ENCODE measurements at regions of chr7 and their contacts with region 1.

Region 1: DNA sequence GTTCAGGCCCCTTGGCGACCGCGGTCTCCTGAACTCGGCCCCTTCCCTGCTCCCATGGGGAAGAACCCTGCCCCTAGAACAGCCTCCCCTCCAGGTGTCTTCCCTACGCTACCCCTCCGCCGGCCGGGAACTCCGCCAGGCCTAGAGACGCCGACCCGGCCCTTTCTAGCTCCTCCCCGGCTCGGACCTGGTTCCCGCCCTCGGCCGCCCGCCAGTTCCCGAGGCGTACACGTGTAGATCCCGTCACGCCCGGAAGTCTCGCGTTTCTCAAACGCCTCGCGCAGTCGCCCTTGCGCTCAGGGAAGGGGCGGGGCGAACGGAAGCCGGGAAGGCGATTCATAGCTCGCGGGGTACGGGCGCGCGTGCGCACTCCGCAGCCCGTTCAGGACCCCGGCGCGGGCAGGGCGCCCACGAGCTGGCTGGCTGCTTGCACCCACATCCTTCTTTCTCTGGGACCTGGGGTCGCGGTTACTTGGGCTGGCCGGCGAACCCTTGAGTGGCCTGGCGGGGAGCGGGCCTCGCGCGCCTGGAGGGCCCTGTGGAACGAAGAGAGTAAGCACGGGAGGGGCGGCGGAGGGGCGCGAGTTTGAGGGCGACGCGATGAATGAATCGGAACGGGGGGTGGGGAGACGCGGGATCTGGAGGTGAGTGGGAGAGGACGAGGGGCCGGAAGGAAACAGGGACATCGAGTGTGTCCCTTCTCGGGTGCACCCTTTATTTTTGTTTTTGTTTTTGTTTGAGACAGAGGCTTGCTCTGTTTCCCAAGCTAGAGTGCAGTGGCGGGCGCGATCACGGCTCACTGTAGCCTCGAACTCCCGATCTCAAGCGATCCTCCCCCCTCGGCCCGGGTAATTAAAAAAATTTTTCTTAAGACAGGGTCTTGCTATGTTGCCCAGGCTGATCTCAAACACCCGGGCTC is at the start of gene POP7:
- DNase-seq: peak; percentile 99
- H3K4me3 ChIP-seq: peak within 1 kb of the TSS; percentile 81
- H3K4me3 Mint-ChIP-seq: peak within 1 kb of the TSS; percentile 98
- H3K27ac Mint-ChIP-seq: peak within 1 kb of the TSS; percentile 97
- H3K4me1 ChIP-seq: peaks cover 7% of the 10 kb centered on the region
- H3K4me1 Mint-ChIP-seq: peaks cover 6% of the 10 kb centered on the region
- H3K27me3 ChIP-seq: no peaks in the 10 kb centered on the region
- H3K27me3 Mint-ChIP-seq: no peaks in the 10 kb centered on the region
- CTCF ChIP-seq: no peak
- total RNA-seq, gene POP7: 65.7 and 66.9 TPM in 2 replicates

Region 2: GRCh38 chr7:100456558-100456957 is 249.5 kb before region 1 on chr7:
- CTCF ChIA-PET with region 1: no interaction called
- POLR2A ChIA-PET with region 1: no interaction called
- intact Hi-C with region 1: no loop called
- DNase-seq: no peak
- H3K4me3 ChIP-seq: no peak overlapping the region
- H3K4me3 Mint-ChIP-seq: no peak overlapping the region
- H3K27ac Mint-ChIP-seq: no peak overlapping the region
- H3K4me1 ChIP-seq: no peaks in the 10 kb centered on the region
- H3K4me1 Mint-ChIP-seq: peaks cover 6% of the 10 kb centered on the region
- H3K27me3 ChIP-seq: no peaks in the 10 kb centered on the region
- H3K27me3 Mint-ChIP-seq: no peaks in the 10 kb centered on the region
- CTCF ChIP-seq: peak in 1 of 2 experiments; percentile 17

Region 3: GRCh38 chr7:100611974-100612729 is 93.9 kb before region 1 on chr7 and contains the start of gene MOSPD3:
- CTCF ChIA-PET with region 1: interaction called, 29 read pairs
- POLR2A ChIA-PET with region 1: interaction called, 35 read pairs
- intact Hi-C with region 1: no loop called
- DNase-seq: peak; percentile 99
- H3K4me3 ChIP-seq: peak within 1 kb of the TSS; percentile 50
- H3K4me3 Mint-ChIP-seq: peak within 1 kb of the TSS; percentile 86
- H3K27ac Mint-ChIP-seq: peak within 1 kb of the TSS; percentile 95
- H3K4me1 ChIP-seq: peaks cover 10% of the 10 kb centered on the region; the same call in 1 of the 2 replicates
- H3K4me1 Mint-ChIP-seq: no peaks in the 10 kb centered on the region
- H3K27me3 ChIP-seq: no peaks in the 10 kb centered on the region
- H3K27me3 Mint-ChIP-seq: no peaks in the 10 kb centered on the region
- CTCF ChIP-seq: no peak
- total RNA-seq, gene MOSPD3: 24.6 and 24.7 TPM in 2 replicates

Region 4: GRCh38 chr7:100649826-100650547 is 56.0 kb before region 1 on chr7:
- CTCF ChIA-PET with region 1: interaction called, 10 read pairs
- POLR2A ChIA-PET with region 1: interaction called, 4 read pairs
- intact Hi-C with region 1: no loop called
- DNase-seq: peak; percentile 71 to 73
- H3K4me3 ChIP-seq: no peak overlapping the region
- H3K4me3 Mint-ChIP-seq: no peak overlapping the region
- H3K27ac Mint-ChIP-seq: no peak overlapping the region
- H3K4me1 ChIP-seq: peaks cover 6% of the 10 kb centered on the region
- H3K4me1 Mint-ChIP-seq: peaks cover 7% of the 10 kb centered on the region
- H3K27me3 ChIP-seq: no peaks in the 10 kb centered on the region
- H3K27me3 Mint-ChIP-seq: no peaks in the 10 kb centered on the region
- CTCF ChIP-seq: no peak

Region 5: GRCh38 chr7:100719523-100720319 is 13.7 kb after region 1 on chr7:
- CTCF ChIA-PET with region 1: interaction called, 155 read pairs
- POLR2A ChIA-PET with region 1: interaction called, 11 read pairs
- intact Hi-C with region 1: loop called (anchors 1 kb)
- DNase-seq: peak; percentile 31 to 71
- H3K4me3 ChIP-seq: peak overlapping the region; percentile 47
- H3K4me3 Mint-ChIP-seq: peak overlapping the region; percentile 65
- H3K27ac Mint-ChIP-seq: no peak overlapping the region
- H3K4me1 ChIP-seq: peaks cover 9% of the 10 kb centered on the region
- H3K4me1 Mint-ChIP-seq: peaks cover 7% of the 10 kb centered on the region
- H3K27me3 ChIP-seq: no peaks in the 10 kb centered on the region
- H3K27me3 Mint-ChIP-seq: no peaks in the 10 kb centered on the region
- CTCF ChIP-seq: no peak

Region 6: DNA sequence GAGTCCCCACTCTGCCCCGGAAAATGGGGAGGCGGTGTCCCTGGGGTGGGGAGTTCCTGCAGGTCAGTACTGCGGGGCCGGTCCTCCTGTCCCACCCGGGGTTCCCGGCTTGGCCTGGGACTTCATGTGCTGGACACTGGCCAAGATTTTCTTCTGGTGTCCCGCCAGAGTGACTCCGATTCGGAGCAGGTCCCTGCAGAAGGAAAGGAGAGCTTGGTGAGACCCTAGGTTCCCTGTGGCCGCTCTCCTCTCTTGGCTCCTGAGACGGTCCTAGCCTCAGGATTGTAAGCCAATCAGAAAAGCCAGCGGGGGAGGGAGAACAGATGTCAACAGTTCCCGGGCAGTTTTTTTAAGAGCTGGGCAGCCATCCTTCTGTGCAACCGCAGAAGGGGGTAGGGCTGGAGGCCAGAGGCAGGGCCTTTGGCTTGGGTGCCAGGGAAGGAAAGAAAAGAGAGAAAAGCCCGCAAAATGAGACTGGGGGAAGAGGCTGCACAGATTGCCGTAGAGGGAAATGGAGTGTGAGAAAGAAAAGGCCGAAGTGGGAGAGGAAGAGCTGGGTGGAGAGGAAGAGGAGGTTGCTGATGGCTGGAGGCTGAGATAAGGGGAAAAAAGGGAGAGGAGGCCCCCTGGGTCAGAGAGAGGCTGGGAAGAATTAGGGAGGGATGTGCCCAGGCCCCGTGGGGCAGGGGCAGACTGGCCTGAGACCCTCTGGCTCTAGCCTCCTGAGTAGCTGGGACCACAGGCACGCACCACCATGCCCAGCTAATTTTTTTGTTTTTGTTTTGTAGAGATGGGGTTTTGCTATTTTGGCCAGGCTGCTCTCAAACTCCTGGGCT is 97.6 kb after region 1 on chr7:
- CTCF ChIA-PET with region 1: interaction called, 12 read pairs
- POLR2A ChIA-PET with region 1: interaction called, 5 read pairs
- intact Hi-C with region 1: no loop called
- DNase-seq: peak in 1 of 2 experiments; percentile 62
- H3K4me3 ChIP-seq: no peak overlapping the region
- H3K4me3 Mint-ChIP-seq: no peak overlapping the region
- H3K27ac Mint-ChIP-seq: peak overlapping the region; percentile 70
- H3K4me1 ChIP-seq: peaks cover 47% of the 10 kb centered on the region
- H3K4me1 Mint-ChIP-seq: peaks cover 38% of the 10 kb centered on the region
- H3K27me3 ChIP-seq: no peaks in the 10 kb centered on the region
- H3K27me3 Mint-ChIP-seq: no peaks in the 10 kb centered on the region
- CTCF ChIP-seq: no peak

Region 7: DNA sequence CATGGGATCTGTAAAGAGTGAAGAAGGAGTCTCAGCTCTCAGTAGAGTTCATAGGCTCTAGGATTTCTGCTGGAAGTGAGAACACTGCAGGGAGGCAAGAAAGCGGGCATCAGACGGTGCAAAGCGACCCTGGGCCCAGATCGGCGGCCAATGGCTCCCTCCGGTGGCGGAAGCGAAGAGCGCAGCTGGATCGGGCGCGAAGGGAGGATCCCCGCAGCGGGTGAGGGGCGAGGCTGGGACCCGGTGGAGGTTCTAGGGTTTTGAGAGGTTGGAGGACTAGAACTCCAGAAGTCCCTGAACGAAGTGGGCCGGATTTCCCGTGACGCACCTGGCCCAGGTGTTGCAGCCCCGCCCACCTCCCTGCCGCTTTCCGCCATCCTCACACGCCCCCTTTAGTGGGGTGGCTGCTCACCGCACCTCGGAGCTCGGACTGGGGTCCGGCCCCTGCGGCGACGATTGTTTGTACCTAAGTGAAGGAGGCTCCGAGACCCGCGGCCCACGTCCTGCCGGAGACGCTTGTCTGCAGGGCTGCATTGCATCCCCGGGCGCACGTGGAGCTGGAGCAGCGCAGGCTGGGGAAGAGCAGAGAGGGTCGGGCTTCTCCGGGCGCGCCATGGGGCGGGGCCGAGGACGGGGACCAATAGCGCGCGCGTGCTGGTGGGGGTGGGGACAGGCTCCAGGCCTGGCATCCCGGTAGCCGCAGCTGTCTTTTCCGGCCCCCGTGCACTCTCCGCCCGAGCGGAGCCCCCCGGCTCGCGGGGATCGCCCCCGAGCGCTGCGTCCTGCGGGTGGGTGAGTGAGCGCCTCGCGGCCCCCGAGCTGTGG is 146.2 kb after region 1 on chr7 and contains the start of gene SLC12A9:
- CTCF ChIA-PET with region 1: interaction called, 66 read pairs
- POLR2A ChIA-PET with region 1: interaction called, 6 read pairs
- intact Hi-C with region 1: loop called (anchors 1 kb)
- DNase-seq: peak; percentile 93 to 95
- H3K4me3 ChIP-seq: peak within 1 kb of the TSS; percentile 74
- H3K4me3 Mint-ChIP-seq: peak within 1 kb of the TSS; percentile 79
- H3K27ac Mint-ChIP-seq: peak within 1 kb of the TSS; percentile 66
- H3K4me1 ChIP-seq: peaks cover 9% of the 10 kb centered on the region
- H3K4me1 Mint-ChIP-seq: peaks cover 15% of the 10 kb centered on the region
- H3K27me3 ChIP-seq: no peaks in the 10 kb centered on the region
- H3K27me3 Mint-ChIP-seq: no peaks in the 10 kb centered on the region
- CTCF ChIP-seq: peak; percentile 89 to 97
- total RNA-seq, gene SLC12A9: 59.0 and 60.7 TPM in 2 replicates

Region 8: GRCh38 chr7:100889761-100890634 is 184.0 kb after region 1 on chr7:
- CTCF ChIA-PET with region 1: interaction called, 5 read pairs
- POLR2A ChIA-PET with region 1: interaction called, 11 read pairs
- intact Hi-C with region 1: no loop called
- DNase-seq: peak; percentile 94 to 96
- H3K4me3 ChIP-seq: peak overlapping the region; percentile 67
- H3K4me3 Mint-ChIP-seq: peak overlapping the region; percentile 88
- H3K27ac Mint-ChIP-seq: peak overlapping the region; percentile 87
- H3K4me1 ChIP-seq: peaks cover 29% of the 10 kb centered on the region
- H3K4me1 Mint-ChIP-seq: peaks cover 50% of the 10 kb centered on the region
- H3K27me3 ChIP-seq: no peaks in the 10 kb centered on the region
- H3K27me3 Mint-ChIP-seq: no peaks in the 10 kb centered on the region
- CTCF ChIP-seq: no peak

Measured in Caco-2 (cell line).